ENCODE measurements at regions of chr14 and their contacts with region 1.

Region 1: DNA sequence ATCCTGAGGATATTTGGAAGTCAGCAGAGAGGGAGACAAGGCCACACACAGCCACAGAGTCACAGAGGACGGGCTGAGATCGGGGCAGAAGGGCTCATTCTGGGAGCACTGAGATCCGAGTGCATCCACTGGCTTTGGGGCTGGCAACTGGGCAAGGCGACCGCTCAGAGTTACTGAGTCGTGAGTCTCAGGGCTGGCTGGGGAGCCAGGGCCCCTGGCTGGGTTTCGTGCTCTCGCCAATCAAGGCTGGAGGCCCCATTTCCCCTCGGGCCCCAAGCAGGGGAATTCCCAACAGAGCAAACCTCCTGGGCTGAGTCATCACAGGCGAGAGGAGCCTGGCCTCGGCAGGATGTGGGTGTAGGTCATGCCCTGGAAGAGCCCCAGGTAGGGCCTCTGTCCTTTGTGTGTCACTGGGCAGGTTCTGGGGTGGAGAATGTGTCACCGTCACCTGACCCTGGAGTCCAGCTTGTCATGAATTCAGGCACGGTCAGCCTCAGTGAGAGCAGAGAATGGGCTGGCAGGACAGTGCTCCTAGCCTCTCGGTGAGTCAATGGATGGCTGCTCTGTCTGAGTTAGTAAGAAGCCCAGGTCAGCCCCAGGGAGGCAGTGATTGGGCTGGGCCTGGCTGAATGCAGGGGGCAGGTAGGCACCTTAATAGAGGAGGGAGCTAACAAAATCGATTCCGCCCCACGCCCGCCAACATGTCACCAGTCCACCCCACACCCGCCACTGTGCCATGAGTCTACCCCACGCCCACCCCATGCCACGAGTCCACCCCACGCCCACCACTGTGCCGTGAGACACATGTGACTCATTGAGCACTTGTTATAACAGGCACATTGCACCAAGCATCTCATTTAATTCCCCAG is 16.9 kb downstream of the ASB2 start:
- DNase-seq: no peak
- H3K4me3 ChIP-seq: no peak overlapping the region
- CTCF ChIP-seq: peak in 1 of 3 donors; percentile 22
- POLR2A ChIP-seq: no peak

Region 2: GRCh38 chr14:92190768-92191167 is 1768.7 kb before region 1 on chr14:
- intact Hi-C with region 1: no loop called
- DNase-seq: no peak
- H3K4me3 ChIP-seq: no peak overlapping the region
- CTCF ChIP-seq: no peak
- POLR2A ChIP-seq: no peak

Region 3: DNA sequence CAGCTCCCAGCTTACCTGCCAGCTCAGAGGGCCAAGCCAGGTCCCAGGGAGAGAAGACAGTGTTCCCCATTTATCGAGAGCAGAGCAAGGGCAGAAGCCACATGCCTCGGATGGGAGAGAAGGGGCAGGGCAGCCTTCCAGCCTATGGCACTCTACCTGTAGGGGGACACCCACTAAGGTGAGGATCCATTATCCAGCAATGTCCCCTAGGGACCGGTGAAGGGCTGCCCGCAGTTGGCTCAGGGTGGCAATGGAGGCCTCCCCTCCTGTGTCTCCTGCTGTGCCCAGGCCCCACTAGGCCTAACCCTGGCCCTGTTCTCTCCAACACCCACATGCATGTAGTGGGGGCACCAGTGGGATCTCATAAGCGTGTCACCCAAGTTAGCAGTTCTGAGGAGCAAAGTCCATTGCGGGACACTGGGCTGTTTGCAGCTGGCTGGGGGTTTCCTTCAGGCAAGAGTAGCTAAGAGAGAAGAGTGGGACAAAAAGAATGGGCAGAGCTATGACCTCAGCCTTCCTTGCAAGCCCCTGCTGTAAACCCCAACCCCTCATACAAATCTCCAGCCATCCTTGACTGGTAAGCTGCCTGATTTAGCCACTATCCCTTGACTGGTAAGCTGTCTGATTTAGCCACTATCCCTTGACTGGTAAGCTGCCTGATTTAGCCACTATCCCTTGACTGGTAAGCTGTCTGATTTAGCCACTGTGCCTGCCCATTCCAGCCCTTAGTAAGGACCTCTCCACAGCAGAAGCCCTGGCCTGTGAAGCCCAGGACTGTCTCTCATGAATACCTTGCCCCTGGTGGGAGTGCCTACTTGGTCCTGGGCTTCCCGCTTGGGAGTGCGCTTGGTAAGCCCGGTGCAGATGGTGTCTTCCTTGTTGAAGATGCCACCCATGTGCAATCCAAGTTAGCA is 22.1 kb after region 1 on chr14:
- intact Hi-C with region 1: loop called (anchors 2 kb)
- DNase-seq: no peak
- H3K4me3 ChIP-seq: no peak overlapping the region
- CTCF ChIP-seq: no peak
- POLR2A ChIP-seq: no peak

Region 4: GRCh38 chr14:94001501-94002396 is 42.3 kb after region 1 on chr14:
- intact Hi-C with region 1: no loop called
- DNase-seq: peak in 1 of 2 donors; percentile 31
- H3K4me3 ChIP-seq: no peak overlapping the region
- CTCF ChIP-seq: peak in 1 of 3 donors; percentile 88
- POLR2A ChIP-seq: no peak